ENCODE measurements at regions of chr20 and their contacts with region 1.

Region 1: DNA sequence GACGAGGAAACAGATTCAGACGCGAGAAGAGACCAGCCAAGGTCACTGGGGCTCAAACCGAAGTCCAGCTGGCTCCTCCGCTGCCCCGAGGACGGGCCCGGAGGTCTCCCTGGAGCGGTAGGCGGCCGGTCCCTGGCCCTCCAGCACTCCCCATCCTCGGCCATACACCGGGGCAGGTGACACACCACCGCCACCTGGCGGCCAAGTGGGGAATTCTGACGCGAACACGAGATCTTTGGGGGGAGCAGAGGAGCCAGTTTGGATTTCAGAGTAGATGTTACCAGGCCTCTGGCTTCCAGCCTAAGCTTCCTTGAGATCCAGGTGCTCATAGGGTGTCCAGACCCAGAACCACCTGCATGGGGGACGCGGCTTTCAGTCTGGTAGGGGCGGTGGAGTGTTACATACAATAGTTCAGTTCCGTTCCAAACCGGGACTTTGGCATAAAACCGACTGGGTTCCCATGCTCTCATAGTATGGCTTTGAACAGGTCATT is 16.1 kb downstream of the BPIFB1 start:
- DNase-seq: peak; percentile 80
- H3K4me3 ChIP-seq: peak overlapping the region in 1 of 2 donors; percentile 9
- H3K27ac ChIP-seq: no peak overlapping the region
- H3K4me1 ChIP-seq: no peaks in the 10 kb centered on the region
- H3K27me3 ChIP-seq: no peaks in the 10 kb centered on the region
- CTCF ChIP-seq: peak; percentile 75 to 96 (median 89)
- POLR2A ChIP-seq: no peak

Region 2: GRCh38 chr20:32902456-32903420 is 396.4 kb before region 1 on chr20:
- intact Hi-C with region 1: loop called (anchors 10 kb)
- DNase-seq: peak; percentile 51
- H3K4me3 ChIP-seq: no peak overlapping the region
- H3K27ac ChIP-seq: no peak overlapping the region
- H3K4me1 ChIP-seq: no peaks in the 10 kb centered on the region
- H3K27me3 ChIP-seq: no peaks in the 10 kb centered on the region
- CTCF ChIP-seq: peak; percentile 67 to 85 (median 82)
- POLR2A ChIP-seq: no peak

Region 3: GRCh38 chr20:33391722-33392415 is 92.7 kb after region 1 on chr20:
- intact Hi-C with region 1: no loop called
- DNase-seq: peak; percentile 43
- H3K4me3 ChIP-seq: no peak overlapping the region
- H3K27ac ChIP-seq: no peak overlapping the region
- H3K4me1 ChIP-seq: no peaks in the 10 kb centered on the region
- H3K27me3 ChIP-seq: no peaks in the 10 kb centered on the region
- CTCF ChIP-seq: no peak
- POLR2A ChIP-seq: no peak

Measured in testis (tissue), 5 donors.